Activated CD4-positive, alpha-beta memory T cell treated with anti-CD3 and anti-CD28 coated beads for 36 hours (primary cell): ENCODE measurements at regions of chr12 and their contacts with region 1.

Region 1: DNA sequence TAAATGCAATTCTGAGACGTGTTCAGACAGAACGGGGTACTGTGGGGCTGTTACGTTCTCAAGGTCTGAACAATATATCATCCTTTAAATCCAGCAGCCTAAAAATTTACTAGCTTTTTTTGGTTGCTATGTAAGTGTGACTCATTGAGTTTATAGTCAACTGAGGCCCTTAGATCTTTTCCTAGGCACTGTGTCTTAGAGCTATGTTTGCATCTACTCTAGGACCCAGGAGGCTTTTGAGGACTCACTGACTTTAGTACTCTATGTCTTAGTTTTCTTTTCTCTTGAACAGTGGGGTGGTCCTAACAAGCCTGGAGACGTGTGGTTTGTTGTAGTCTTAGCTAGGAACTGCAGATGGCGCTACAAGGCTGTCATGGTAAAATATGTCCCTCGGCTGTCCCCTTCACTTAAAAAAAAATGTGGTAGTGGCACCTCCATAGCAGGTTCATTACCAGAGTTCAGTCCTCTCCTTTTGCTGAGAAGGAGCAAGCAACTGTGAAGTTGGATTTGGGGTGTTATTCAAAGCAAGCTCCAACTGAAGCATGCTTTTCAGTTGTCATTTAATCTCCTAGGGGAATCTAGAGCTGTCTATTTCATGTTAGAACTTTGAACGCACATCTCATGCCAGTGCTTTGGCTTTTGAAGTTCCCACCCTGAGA is 8.7 kb upstream of the SPATS2 start:
- DNase-seq: peak; percentile 69
- H3K4me3 Mint-ChIP-seq: no peak overlapping the region
- H3K27ac Mint-ChIP-seq: no peak overlapping the region
- H3K4me1 Mint-ChIP-seq: peaks cover 5% of the 10 kb centered on the region
- H3K27me3 Mint-ChIP-seq: peaks cover 21% of the 10 kb centered on the region

Region 2: GRCh38 chr12:49079793-49080192 is 278.8 kb before region 1 on chr12:
- CTCF ChIA-PET with region 1: no interaction called
- POLR2A ChIA-PET with region 1: no interaction called
- intact Hi-C with region 1: no loop called
- DNase-seq: no peak
- H3K4me3 Mint-ChIP-seq: no peak overlapping the region
- H3K27ac Mint-ChIP-seq: no peak overlapping the region
- H3K4me1 Mint-ChIP-seq: no peaks in the 10 kb centered on the region
- H3K27me3 Mint-ChIP-seq: no peaks in the 10 kb centered on the region

Region 3: GRCh38 chr12:49288412-49288853 is 70.2 kb before region 1 on chr12:
- CTCF ChIA-PET with region 1: interaction called, 82 read pairs
- POLR2A ChIA-PET with region 1: no interaction called
- intact Hi-C with region 1: no loop called
- DNase-seq: peak; percentile 80
- H3K4me3 Mint-ChIP-seq: no peak overlapping the region
- H3K27ac Mint-ChIP-seq: no peak overlapping the region
- H3K4me1 Mint-ChIP-seq: no peaks in the 10 kb centered on the region
- H3K27me3 Mint-ChIP-seq: peaks cover 23% of the 10 kb centered on the region

Region 4: DNA sequence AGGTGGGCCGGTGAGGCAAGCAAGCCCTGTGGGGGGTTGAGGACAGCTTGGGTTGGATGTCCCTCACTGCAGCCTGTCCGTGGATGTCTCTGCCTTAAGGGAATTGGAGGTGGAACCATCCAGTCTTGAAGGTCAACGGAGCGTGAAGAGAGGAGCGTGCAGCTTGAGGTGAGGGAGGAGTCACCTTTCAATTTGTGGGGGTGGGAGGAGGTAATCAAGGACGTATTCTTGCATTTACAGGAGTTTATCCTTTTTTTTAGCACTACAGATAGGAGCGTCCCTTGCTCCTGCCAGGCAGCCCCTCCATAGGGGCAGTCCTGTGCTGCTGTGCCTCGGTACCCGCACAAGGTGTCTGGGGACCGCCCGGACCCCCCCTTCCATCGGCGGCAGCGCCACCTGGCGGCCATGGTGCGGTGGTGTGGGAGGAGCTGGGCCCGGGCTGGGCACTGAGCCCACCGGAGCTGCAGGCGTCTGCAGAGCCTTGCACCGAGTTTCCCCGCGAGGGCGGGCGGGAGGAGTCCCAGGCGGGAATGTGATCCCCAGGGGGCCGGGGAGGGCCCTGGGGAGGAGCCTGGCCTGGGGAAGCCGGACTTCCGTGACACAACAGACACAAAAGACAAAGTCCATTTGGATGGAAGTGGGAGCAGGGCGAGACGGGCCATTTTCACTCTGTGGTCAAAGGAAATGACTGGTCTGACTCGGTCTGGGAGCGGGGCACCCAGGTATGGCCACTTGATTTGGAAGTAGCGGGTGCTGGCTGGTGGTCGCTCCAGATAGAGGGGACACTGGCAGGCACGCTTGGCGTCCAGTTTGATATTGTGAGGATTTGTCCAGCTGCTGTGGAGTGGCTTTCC is 11.0 kb before region 1 on chr12:
- CTCF ChIA-PET with region 1: interaction called, 98 read pairs
- POLR2A ChIA-PET with region 1: no interaction called
- intact Hi-C with region 1: no loop called
- DNase-seq: peak; percentile 82
- H3K4me3 Mint-ChIP-seq: peak overlapping the region; percentile 36
- H3K27ac Mint-ChIP-seq: no peak overlapping the region
- H3K4me1 Mint-ChIP-seq: peaks cover 36% of the 10 kb centered on the region
- H3K27me3 Mint-ChIP-seq: peaks cover 55% of the 10 kb centered on the region

Region 5: GRCh38 chr12:49470986-49471385 is 112.4 kb after region 1 on chr12:
- CTCF ChIA-PET with region 1: interaction called, 10 read pairs
- POLR2A ChIA-PET with region 1: no interaction called
- intact Hi-C with region 1: no loop called
- DNase-seq: no peak
- H3K4me3 Mint-ChIP-seq: no peak overlapping the region
- H3K27ac Mint-ChIP-seq: no peak overlapping the region
- H3K4me1 Mint-ChIP-seq: no peaks in the 10 kb centered on the region
- H3K27me3 Mint-ChIP-seq: no peaks in the 10 kb centered on the region

Region 6: DNA sequence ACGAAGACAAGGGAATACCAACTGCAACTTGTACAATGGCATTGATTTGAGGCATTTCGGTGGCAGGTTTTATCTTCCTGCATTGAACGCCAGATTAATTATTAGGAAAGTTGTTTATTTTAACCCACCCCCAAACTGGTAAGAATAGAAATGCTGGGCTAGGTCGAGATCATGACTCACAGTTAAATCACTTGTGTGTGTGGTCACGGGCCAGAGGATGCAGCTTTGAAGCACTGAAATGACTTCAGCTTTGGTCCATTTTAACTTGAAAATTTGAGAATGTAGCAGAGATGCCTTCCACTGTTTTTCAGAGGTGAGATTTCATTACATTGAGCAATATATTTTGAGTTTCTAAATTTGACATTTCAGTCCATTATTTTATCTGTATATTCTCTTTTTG is 156.7 kb after region 1 on chr12:
- CTCF ChIA-PET with region 1: interaction called, 428 read pairs
- POLR2A ChIA-PET with region 1: interaction called, 5 read pairs
- intact Hi-C with region 1: loop called (anchors 1 kb)
- DNase-seq: no peak
- H3K4me3 Mint-ChIP-seq: no peak overlapping the region
- H3K27ac Mint-ChIP-seq: no peak overlapping the region
- H3K4me1 Mint-ChIP-seq: peaks cover 6% of the 10 kb centered on the region
- H3K27me3 Mint-ChIP-seq: no peaks in the 10 kb centered on the region

Region 7: GRCh38 chr12:49580572-49581535 is 222.2 kb after region 1 on chr12:
- CTCF ChIA-PET with region 1: interaction called, 18 read pairs
- POLR2A ChIA-PET with region 1: no interaction called
- intact Hi-C with region 1: no loop called
- DNase-seq: peak; percentile 65
- H3K4me3 Mint-ChIP-seq: no peak overlapping the region
- H3K27ac Mint-ChIP-seq: peak overlapping the region; percentile 8
- H3K4me1 Mint-ChIP-seq: peaks cover 18% of the 10 kb centered on the region
- H3K27me3 Mint-ChIP-seq: no peaks in the 10 kb centered on the region